ENCODE measurements at regions of chr1 and their contacts with region 1.

Region 1: GRCh38 chr1:39653546-39654031 is 14.1 kb upstream of the HEYL start:
- DNase-seq: peak; percentile 77 to 80
- H3K4me3 ChIP-seq: peak overlapping the region in 1 of 3 donors; percentile 25
- H3K27ac ChIP-seq: no peak overlapping the region
- H3K4me1 ChIP-seq: no peaks in the 10 kb centered on the region
- H3K27me3 ChIP-seq: no peaks in the 10 kb centered on the region
- CTCF ChIP-seq: peak; percentile 66 to 89 (median 80)
- POLR2A ChIP-seq: no peak

Region 2: DNA sequence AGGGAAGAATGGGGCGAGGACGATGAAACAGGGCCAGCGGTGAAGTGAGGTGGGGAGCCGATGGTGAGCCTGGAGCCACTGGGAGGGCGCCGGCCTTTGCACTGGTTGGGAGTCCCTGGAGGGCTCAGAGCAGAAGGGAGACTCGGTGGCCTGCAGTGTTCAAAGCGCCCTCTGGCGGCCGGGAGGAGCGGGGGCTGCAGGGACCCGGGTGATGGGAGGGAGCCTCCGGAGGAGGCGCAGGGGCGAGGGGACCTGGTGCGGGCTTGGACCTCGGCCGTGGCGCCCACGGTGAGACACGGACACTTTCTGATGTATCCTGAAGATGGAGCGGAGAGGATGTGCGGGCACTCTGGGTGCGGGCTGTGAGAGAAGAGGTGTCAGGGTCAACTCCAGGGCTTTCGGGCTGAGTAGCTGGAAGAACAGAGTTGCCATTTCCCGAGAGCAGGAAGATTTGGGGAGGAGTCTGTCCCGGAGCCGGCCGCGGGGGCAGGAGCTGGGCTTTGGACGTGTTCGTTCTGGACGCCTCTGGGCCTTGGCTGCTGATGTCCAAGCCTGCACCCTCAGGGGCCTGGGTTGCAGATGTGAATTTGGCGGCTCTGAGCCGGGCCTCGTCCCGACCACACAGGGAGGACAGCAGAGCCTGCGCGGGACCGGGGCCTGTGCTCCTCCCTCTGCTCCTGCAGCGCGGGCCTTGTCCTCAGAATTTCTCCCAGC is 43.8 kb before region 1 on chr1:
- intact Hi-C with region 1: loop called (anchors 2 kb)
- DNase-seq: no peak
- H3K4me3 ChIP-seq: peak overlapping the region; percentile 7 to 57 (median 21)
- H3K27ac ChIP-seq: peak overlapping the region in 1 of 2 donors; percentile 63
- H3K4me1 ChIP-seq: no peaks in the 10 kb centered on the region
- H3K27me3 ChIP-seq: no peaks in the 10 kb centered on the region
- CTCF ChIP-seq: peak in 2 of 3 donors; percentile 37 to 45
- POLR2A ChIP-seq: no peak

Region 3: DNA sequence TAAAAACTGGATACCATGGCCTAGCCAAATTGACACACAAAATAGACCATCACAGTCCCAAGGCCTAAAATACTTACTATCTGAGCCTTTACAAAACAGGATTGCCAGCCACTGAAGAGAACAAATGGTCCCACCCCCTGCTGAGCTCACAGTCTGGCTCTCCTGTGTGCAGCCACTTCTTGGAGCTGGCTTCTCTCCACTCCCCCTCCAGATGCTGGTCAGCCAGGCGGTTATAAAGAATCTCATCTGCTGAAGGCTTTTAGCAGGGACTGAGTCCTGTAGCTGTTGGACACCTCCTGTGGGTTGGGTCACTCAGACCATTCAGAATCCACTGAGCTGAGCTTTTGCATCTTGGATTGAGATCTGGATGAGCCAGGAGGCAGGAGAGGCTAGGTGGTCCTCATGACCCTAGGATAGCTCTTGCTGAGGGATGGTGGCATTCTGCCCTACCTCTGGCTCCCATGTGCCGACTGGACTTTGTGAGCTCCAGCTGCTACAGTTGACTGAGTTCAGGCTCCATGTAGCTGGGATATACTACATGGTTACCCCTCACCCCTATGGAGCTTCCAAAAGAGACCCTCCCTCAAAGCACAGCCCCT is 101.4 kb after region 1 on chr1:
- intact Hi-C with region 1: loop called (anchors 5 kb)
- DNase-seq: no peak
- H3K4me3 ChIP-seq: no peak overlapping the region
- H3K27ac ChIP-seq: no peak overlapping the region
- H3K4me1 ChIP-seq: no peaks in the 10 kb centered on the region
- H3K27me3 ChIP-seq: no peaks in the 10 kb centered on the region
- CTCF ChIP-seq: no peak
- POLR2A ChIP-seq: no peak

Measured in breast epithelium (tissue), 4 donors.